CD8-positive, alpha-beta T cell (primary cell): ENCODE measurements at regions of chr11 and their contacts with region 1.

Region 1: GRCh38 chr11:57144075-57144474 is 37.7 kb upstream of the LRRC55 start:
- DNase-seq: no peak
- ATAC-seq: no peak
- H3K4me3 ChIP-seq: no peak overlapping the region
- H3K4me3 Mint-ChIP-seq: no peak overlapping the region
- H3K27ac ChIP-seq: no peak overlapping the region
- H3K27ac Mint-ChIP-seq: no peak overlapping the region
- H3K4me1 ChIP-seq: no peaks in the 10 kb centered on the region
- H3K4me1 Mint-ChIP-seq: no peaks in the 10 kb centered on the region
- H3K27me3 ChIP-seq: no peaks in the 10 kb centered on the region
- H3K27me3 Mint-ChIP-seq: peaks cover 10% of the 10 kb centered on the region
- CTCF ChIP-seq: no peak

Region 2: GRCh38 chr11:57049749-57050148 is 94.3 kb before region 1 on chr11:
- CTCF ChIA-PET with region 1: no interaction called
- POLR2A ChIA-PET with region 1: no interaction called
- intact Hi-C with region 1: no loop called
- DNase-seq: no peak
- ATAC-seq: no peak
- H3K4me3 ChIP-seq: no peak overlapping the region
- H3K4me3 Mint-ChIP-seq: no peak overlapping the region
- H3K27ac ChIP-seq: no peak overlapping the region
- H3K27ac Mint-ChIP-seq: no peak overlapping the region
- H3K4me1 ChIP-seq: no peaks in the 10 kb centered on the region
- H3K4me1 Mint-ChIP-seq: no peaks in the 10 kb centered on the region
- H3K27me3 ChIP-seq: no peaks in the 10 kb centered on the region
- H3K27me3 Mint-ChIP-seq: no peaks in the 10 kb centered on the region
- CTCF ChIP-seq: no peak

Region 3: GRCh38 chr11:57085611-57086010 is 58.5 kb before region 1 on chr11:
- CTCF ChIA-PET with region 1: no interaction called
- POLR2A ChIA-PET with region 1: no interaction called
- intact Hi-C with region 1: loop called in 1 of 2 experiments (anchors 10 kb)
- DNase-seq: no peak
- ATAC-seq: no peak
- H3K4me3 ChIP-seq: no peak overlapping the region
- H3K4me3 Mint-ChIP-seq: no peak overlapping the region
- H3K27ac ChIP-seq: no peak overlapping the region
- H3K27ac Mint-ChIP-seq: no peak overlapping the region
- H3K4me1 ChIP-seq: no peaks in the 10 kb centered on the region
- H3K4me1 Mint-ChIP-seq: no peaks in the 10 kb centered on the region
- H3K27me3 ChIP-seq: no peaks in the 10 kb centered on the region
- H3K27me3 Mint-ChIP-seq: peaks cover 9% of the 10 kb centered on the region
- CTCF ChIP-seq: no peak